Common myeloid progenitor, CD34-positive (primary cell): ENCODE measurements at regions of chr14 and their contacts with region 1.

Region 1: GRCh38 chr14:106665814-106666213 is 1139.4 kb downstream of the TMEM121 start:
- DNase-seq: no peak
- H3K4me3 ChIP-seq: no peak overlapping the region
- H3K27ac ChIP-seq: no peak overlapping the region
- H3K4me1 ChIP-seq: peaks cover 3 to 44% (median 15%) of the 10 kb centered on the region in 4 experiments
- H3K27me3 ChIP-seq: no peaks in the 10 kb centered on the region

Region 2: GRCh38 chr14:106681568-106681967 is 15.8 kb after region 1 on chr14:
- CTCF ChIA-PET with region 1: interaction called, 188 read pairs
- POLR2A ChIA-PET with region 1: no interaction called
- DNase-seq: peak in 2 of 3 donors; percentile 31 to 48
- H3K4me3 ChIP-seq: no peak overlapping the region
- H3K27ac ChIP-seq: no peak overlapping the region
- H3K4me1 ChIP-seq: peaks cover 0 to 29% (median 22%) of the 10 kb centered on the region in 4 experiments
- H3K27me3 ChIP-seq: no peaks in the 10 kb centered on the region